Activated CD4-positive, alpha-beta memory T cell treated with anti-CD3 and anti-CD28 coated beads for 36 hours (primary cell): ENCODE measurements at regions of chr13 and their contacts with region 1.

Region 1: GRCh38 chr13:95191821-95192563 is 109.3 kb downstream of the ABCC4 start:
- DNase-seq: peak; percentile 78
- H3K4me3 Mint-ChIP-seq: no peak overlapping the region
- H3K27ac Mint-ChIP-seq: no peak overlapping the region
- H3K4me1 Mint-ChIP-seq: peaks cover 9% of the 10 kb centered on the region
- H3K27me3 Mint-ChIP-seq: no peaks in the 10 kb centered on the region

Region 2: GRCh38 chr13:95174517-95174916 is 17.5 kb before region 1 on chr13:
- CTCF ChIA-PET with region 1: interaction called, 22 read pairs
- POLR2A ChIA-PET with region 1: no interaction called
- intact Hi-C with region 1: no loop called
- DNase-seq: no peak
- H3K4me3 Mint-ChIP-seq: no peak overlapping the region
- H3K27ac Mint-ChIP-seq: no peak overlapping the region
- H3K4me1 Mint-ChIP-seq: peaks cover 21% of the 10 kb centered on the region
- H3K27me3 Mint-ChIP-seq: no peaks in the 10 kb centered on the region

Region 3: DNA sequence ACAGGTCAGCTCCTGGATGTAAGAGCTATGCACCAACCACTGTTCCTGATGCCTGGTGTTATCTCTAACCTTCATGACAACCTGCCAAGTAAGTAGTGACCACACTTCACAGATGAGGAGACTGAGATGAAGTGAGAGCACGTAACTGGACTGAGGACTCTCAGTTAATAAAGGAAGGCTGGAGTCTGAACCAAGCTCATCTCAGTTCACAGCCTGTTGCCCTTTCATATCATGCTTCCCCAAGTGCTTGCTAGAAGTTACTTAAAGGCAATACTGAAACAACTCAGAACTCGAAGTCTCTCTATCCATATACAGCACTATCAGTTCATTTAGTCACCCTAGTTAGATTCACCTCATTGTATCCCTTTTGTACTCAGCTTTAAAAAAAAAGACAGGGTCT is 10.4 kb before region 1 on chr13:
- CTCF ChIA-PET with region 1: interaction called, 22 read pairs
- POLR2A ChIA-PET with region 1: no interaction called
- intact Hi-C with region 1: no loop called
- DNase-seq: no peak
- H3K4me3 Mint-ChIP-seq: no peak overlapping the region
- H3K27ac Mint-ChIP-seq: peak overlapping the region; percentile 57
- H3K4me1 Mint-ChIP-seq: peaks cover 64% of the 10 kb centered on the region
- H3K27me3 Mint-ChIP-seq: no peaks in the 10 kb centered on the region

Region 4: DNA sequence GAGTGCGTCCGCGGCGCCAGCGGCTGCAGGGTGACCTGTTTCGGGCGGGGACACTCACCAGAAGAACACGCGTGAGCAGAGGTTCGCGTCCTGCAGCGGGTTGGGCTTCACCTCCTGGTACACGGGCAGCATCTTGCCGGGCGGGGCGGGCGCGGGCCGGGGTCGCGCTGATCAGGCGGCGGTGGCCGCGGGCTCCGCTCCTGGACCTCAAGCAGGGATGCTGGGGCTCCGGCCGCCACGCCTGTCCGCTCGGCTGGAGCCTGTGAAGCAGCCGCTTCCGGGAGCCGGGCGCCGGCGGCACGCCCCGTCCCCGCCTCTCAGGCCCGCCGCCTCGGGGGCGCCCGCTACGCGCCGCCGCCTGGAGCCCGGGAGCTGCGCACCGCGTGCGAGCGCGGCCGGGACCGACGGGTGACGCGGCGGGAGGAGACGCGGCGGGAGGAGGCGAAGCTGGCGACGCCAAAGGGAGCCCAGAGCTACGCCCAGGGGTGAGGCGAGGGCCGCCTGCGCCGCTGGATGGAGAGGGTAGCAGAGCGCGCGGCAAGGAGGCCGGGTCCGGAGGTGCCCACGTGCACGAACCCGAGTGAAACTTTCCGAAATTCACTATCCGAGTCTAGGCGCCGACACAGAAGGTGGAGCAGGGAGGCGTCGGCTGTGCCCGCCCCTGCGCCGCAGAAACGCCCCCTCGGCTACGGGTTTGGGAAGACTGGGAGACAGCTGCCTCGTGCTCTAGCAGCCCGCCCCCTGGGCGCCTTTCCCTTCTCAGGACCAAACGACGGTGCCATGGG is 109.4 kb after region 1 on chr13 and contains the start of gene ABCC4:
- CTCF ChIA-PET with region 1: interaction called, 11 read pairs
- POLR2A ChIA-PET with region 1: interaction called, 3 read pairs
- intact Hi-C with region 1: loop called (anchors 2 kb)
- DNase-seq: peak; percentile 67
- H3K4me3 Mint-ChIP-seq: peak within 1 kb of the TSS; percentile 75
- H3K27ac Mint-ChIP-seq: peak within 1 kb of the TSS; percentile 5
- H3K4me1 Mint-ChIP-seq: peaks cover 32% of the 10 kb centered on the region
- H3K27me3 Mint-ChIP-seq: no peaks in the 10 kb centered on the region
- total RNA-seq, gene ABCC4: 6.9 to 8.7 TPM

Region 5: GRCh38 chr13:95378603-95379002 is 186.6 kb after region 1 on chr13:
- CTCF ChIA-PET with region 1: interaction called, 201 read pairs
- POLR2A ChIA-PET with region 1: no interaction called
- intact Hi-C with region 1: loop called (anchors 1 kb)
- DNase-seq: no peak
- H3K4me3 Mint-ChIP-seq: no peak overlapping the region
- H3K27ac Mint-ChIP-seq: no peak overlapping the region
- H3K4me1 Mint-ChIP-seq: peaks cover 6% of the 10 kb centered on the region
- H3K27me3 Mint-ChIP-seq: peaks cover 3% of the 10 kb centered on the region